Head of caudate nucleus (tissue), 42 donors: ENCODE measurements at regions of chr16 and their contacts with region 1.

Region 1: GRCh38 chr16:5502467-5502869 is 404.9 kb upstream of the EEF2KMT start:
- DNase-seq: peak in 31 of 42 donors; percentile 12 to 66 (median 34)

Region 2: DNA sequence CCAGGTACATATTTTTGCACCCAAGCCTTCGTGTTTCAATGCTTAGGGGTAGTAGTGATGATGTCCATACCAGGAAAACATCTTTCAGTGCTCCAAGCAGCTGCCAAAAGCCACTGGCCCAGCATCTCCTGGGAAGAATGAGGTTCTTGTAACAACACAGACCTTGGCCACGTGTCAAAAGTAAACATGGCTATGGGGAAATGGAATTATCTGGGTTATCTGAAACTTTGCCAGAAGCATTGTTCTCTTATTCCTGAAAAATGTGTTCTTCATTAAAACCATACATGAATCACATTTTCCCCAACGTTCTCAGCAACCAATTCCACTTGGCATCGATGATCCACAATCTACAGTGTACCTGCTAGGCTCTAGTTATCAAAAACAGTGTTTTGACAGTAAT is 119.4 kb after region 1 on chr16:
- intact Hi-C with region 1: loop called (anchors 5 kb)
- DNase-seq: no peak